Activated naive CD4-positive, alpha-beta T cell treated with anti-CD3 and anti-CD28 coated beads for 36 hours (primary cell): ENCODE measurements at regions of chr19 and their contacts with region 1.

Region 1: DNA sequence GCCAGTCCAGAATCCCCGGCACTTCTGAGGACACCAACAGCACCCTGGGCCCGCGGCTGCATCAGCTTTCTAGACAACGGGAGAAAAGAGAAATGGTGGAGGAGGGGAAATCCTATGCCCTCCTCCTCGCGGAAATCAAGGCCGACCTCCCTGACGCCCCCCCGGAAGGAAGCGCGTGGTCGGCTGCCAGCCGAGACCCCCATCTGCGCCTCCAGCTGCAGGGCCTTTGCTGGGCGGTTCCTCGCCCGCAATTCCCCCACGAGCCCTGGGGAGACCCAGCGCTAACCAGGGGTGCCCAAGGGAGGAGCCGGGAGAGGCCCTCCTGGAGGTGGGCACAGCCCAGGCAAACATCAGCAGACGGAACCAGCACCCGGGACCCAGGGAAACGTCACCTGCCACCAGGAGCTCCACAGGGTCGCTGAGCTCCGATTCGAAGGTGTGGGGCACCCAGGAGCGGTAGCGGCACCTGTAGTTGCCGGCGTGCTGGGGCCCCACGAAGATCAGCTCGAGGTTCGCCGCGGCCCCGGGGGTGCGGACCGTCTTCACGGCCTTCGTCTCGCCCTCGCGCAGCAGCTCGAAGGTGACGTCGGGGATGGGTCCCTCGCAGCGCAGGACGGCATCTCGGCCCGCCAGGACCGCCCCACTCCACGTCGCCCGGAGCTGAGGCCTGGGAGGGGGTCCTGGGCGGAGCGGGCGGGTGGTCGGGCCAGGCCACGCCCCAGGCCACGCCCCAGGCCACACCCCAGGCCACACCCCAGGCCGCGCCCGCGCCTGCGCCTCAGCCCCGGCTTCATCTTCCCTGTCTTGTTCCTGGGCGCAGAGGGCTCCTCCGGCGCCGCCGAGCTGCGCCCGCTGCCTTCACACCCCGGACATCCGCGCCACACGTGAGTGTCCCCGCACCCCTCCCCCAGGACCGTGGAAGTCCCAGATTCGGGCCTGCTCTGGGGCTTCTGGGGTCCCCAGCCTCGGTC is 6.0 kb downstream of the A1BG start:
- DNase-seq: peak; percentile 69
- H3K4me3 Mint-ChIP-seq: peak overlapping the region; percentile 87
- H3K27ac Mint-ChIP-seq: peak overlapping the region; percentile 21
- H3K4me1 Mint-ChIP-seq: peaks cover 23% of the 10 kb centered on the region
- H3K27me3 Mint-ChIP-seq: peaks cover 5% of the 10 kb centered on the region

Region 2: DNA sequence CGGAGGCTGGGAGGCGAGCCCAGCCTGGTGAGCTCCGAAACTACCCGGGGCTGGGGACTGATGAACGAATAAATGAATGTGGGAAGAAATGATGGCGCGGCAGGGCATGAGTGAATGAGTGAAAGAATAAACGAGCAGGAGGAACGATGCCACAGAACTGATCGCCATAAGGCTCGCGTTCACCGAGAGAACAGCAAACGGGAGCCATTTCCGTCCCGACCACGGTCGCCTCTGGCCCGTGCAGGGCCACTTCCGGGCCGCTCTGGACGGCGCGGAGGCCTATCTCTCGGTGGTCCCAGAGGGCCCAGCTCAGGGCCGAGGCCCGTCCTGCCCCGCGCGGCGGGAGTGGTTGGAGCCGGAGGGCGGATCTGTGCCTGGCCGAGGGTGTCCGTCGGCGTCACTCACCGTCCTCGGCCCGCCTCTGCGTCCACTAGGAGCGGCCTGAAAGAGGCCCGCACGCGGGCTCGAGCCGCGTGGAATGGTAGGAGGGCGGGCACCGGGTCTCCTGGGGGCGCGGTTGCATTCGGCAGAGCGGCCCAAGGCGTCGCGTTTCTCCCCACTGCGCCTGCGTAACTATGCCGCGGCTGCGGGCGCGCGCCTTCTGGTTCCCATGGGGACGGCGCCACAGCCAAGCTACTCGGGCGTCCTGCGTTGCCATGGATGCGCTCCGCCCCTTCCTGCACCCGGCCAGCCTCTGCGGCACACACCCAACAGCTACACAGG is 15.2 kb after region 1 on chr19 and contains the start of gene ZNF497:
- CTCF ChIA-PET with region 1: no interaction called
- intact Hi-C with region 1: loop called (anchors 1 kb)
- DNase-seq: peak; percentile 97
- H3K4me3 Mint-ChIP-seq: peak within 1 kb of the TSS; percentile 93
- H3K27ac Mint-ChIP-seq: peak within 1 kb of the TSS; percentile 87
- H3K4me1 Mint-ChIP-seq: peaks cover 8% of the 10 kb centered on the region
- H3K27me3 Mint-ChIP-seq: no peaks in the 10 kb centered on the region
- total RNA-seq, gene ZNF497: 0.40 to 0.41 TPM